GM23248 (cell line): ENCODE measurements at regions of chr22 and their contacts with region 1.

Region 1: DNA sequence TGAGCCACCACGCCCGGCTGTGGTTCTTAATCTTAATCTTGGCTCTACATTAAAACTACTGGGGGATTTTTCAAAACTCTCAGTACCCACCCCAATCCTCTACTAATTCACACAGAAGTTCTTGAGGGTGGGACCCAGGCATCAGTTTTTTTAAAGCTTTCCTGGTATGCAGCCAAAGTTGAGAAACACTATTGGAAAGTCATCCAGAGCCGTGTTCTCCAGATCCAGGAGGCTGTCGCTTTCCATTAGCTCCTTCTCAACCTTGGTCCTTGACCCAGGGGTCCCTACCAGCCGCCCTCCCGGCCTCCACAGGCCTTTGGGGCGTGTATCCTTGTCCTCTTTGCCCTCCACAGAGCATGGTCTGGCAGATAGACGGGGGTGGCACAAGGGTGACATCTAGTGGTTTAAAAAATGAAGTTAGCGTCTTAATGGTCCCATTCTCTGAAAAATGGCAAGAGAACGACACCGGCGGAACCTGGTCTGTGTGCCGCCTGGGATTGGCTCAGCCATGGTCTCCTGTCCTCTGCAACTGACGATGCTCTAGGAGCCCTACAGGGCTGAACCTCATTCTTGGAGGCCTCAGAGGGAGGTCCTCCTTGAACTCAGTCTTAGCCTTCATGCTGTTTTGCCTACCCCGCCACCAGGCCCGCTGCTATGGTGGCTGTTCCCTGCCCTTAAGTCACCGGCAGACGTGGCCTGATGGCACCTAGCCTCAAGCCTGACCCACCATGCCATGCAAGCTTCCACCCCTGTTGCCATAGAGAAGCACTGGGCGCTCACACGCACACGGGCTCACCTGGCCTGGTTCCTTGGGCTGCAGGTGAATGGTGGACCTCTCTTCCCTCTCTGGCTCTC is 152.0 kb upstream of the SYN3 start:
- DNase-seq: peak; percentile 61
- H3K4me3 ChIP-seq: no peak overlapping the region
- H3K27ac ChIP-seq: no peak overlapping the region
- H3K4me1 ChIP-seq: no peaks in the 10 kb centered on the region
- H3K27me3 ChIP-seq: peaks cover 6% of the 10 kb centered on the region; the same call in 1 of the 2 replicates

Region 2: GRCh38 chr22:33018232-33018864 is 191.8 kb before region 1 on chr22:
- in situ Hi-C with region 1: loop called (anchors 10 kb)
- DNase-seq: peak; percentile 65
- H3K4me3 ChIP-seq: no peak overlapping the region
- H3K27ac ChIP-seq: no peak overlapping the region
- H3K4me1 ChIP-seq: no peaks in the 10 kb centered on the region
- H3K27me3 ChIP-seq: peaks cover 9% of the 10 kb centered on the region; the same call in 1 of the 2 replicates

Region 3: GRCh38 chr22:33149611-33150010 is 60.5 kb before region 1 on chr22:
- in situ Hi-C with region 1: no loop called
- DNase-seq: no peak
- H3K4me3 ChIP-seq: no peak overlapping the region
- H3K27ac ChIP-seq: no peak overlapping the region
- H3K4me1 ChIP-seq: no peaks in the 10 kb centered on the region
- H3K27me3 ChIP-seq: no peaks in the 10 kb centered on the region